ENCODE measurements at regions of chr21 and their contacts with region 1.

Region 1: GRCh38 chr21:29024474-29025327 is at the start of gene USP16:
- DNase-seq: peak; percentile 98

Region 2: GRCh38 chr21:28992526-28993292 is 32.0 kb before region 1 on chr21 and contains the start of gene LTN1:
- CTCF ChIA-PET with region 1: no interaction called
- POLR2A ChIA-PET with region 1: interaction called, 45 read pairs
- DNase-seq: peak; percentile 98

Region 3: GRCh38 chr21:29073222-29074006 is 48.7 kb after region 1 on chr21 and contains the start of gene CCT8:
- CTCF ChIA-PET with region 1: no interaction called
- POLR2A ChIA-PET with region 1: interaction called, 11 read pairs
- DNase-seq: peak; percentile 100

Measured in HEK293T (cell line).